ENCODE measurements at regions of chr1 and their contacts with region 1.

Region 1: GRCh38 chr1:32817159-32817814 is at the starts of genes S100PBP and YARS1:
- DNase-seq: peak; percentile 99
- H3K4me3 ChIP-seq: peak within 1 kb of the TSS; percentile 100
- H3K27ac ChIP-seq: peak within 1 kb of the TSS; percentile 99
- H3K4me1 ChIP-seq: peaks cover 62% of the 10 kb centered on the region
- CTCF ChIP-seq: no peak
- total RNA-seq, gene S100PBP: 72.1 and 91.8 TPM in 2 replicates
- total RNA-seq, gene YARS1: 276 and 282 TPM in 2 replicates

Region 2: DNA sequence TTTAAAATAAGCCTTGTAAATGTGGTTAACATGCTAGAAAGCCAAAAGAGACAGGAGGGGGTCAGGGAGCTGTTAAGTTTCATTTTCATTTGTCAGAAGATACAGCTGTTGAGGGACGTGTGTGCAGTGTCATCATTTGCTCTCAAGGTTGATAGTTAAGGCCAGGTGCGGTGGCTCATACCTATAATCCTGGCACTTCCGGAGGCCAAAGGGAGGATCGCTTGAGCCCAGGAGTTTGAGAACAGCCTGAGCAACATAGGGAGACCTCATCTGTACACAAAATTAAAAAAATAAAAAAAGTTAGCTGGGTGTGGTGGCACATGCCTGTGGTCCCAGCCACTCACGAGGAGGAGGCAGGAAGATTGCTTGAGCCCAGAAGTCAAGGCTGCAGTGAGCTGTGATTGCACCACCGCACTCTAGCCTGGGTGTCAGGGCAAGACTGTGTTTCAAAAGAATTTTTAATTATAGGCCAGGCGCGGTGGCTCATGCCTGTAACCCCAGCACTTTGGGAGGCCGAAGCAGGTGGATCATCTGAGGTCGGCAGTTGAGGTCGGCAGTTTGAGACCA is 189.6 kb before region 1 on chr1:
- CTCF ChIA-PET with region 1: no interaction called
- POLR2A ChIA-PET with region 1: no interaction called
- intact Hi-C with region 1: loop called (anchors 1 kb)
- DNase-seq: peak; percentile 84
- H3K4me3 ChIP-seq: peak overlapping the region; percentile 31
- H3K27ac ChIP-seq: peak overlapping the region; percentile 89
- H3K4me1 ChIP-seq: peaks cover 63% of the 10 kb centered on the region
- CTCF ChIP-seq: no peak

Region 3: GRCh38 chr1:32650752-32651460 is 166.4 kb before region 1 on chr1 and contains the start of gene RBBP4:
- CTCF ChIA-PET with region 1: no interaction called
- POLR2A ChIA-PET with region 1: no interaction called
- intact Hi-C with region 1: loop called (anchors 1 kb)
- DNase-seq: peak; percentile 98
- H3K4me3 ChIP-seq: peak within 1 kb of the TSS; percentile 82
- H3K27ac ChIP-seq: peak within 1 kb of the TSS; percentile 96
- H3K4me1 ChIP-seq: peaks cover 61% of the 10 kb centered on the region
- CTCF ChIP-seq: no peak
- total RNA-seq, gene RBBP4: 353 and 393 TPM in 2 replicates

Region 4: DNA sequence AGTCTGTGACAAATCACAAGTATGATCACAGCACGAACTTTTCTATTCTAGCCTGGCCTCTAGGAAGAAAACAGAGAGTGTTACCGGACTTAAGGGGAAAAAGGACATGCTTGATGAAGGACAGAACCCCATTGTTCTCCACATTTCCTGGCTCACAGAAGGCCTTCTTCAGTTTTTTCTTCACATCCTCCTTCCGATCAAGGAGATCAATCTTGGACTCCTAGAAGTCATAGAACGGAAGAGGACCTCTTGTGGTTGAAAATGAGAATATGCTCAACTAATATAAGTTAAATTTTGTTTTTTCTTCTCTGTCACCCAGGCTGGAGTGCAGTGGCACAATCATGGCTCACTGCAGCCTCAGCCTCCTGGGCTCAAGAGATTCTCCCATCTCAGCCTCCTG is 30.4 kb before region 1 on chr1:
- CTCF ChIA-PET with region 1: no interaction called
- POLR2A ChIA-PET with region 1: no interaction called
- intact Hi-C with region 1: no loop called
- DNase-seq: peak; percentile 25
- H3K4me3 ChIP-seq: no peak overlapping the region
- H3K27ac ChIP-seq: no peak overlapping the region
- H3K4me1 ChIP-seq: no peaks in the 10 kb centered on the region
- CTCF ChIP-seq: peak; percentile 63

Region 5: GRCh38 chr1:32876341-32877210 is 59.3 kb after region 1 on chr1:
- CTCF ChIA-PET with region 1: interaction called, 3 read pairs
- POLR2A ChIA-PET with region 1: no interaction called
- intact Hi-C with region 1: loop called (anchors 2 kb)
- DNase-seq: peak; percentile 73
- H3K4me3 ChIP-seq: no peak overlapping the region
- H3K27ac ChIP-seq: no peak overlapping the region
- H3K4me1 ChIP-seq: peaks cover 35% of the 10 kb centered on the region
- CTCF ChIP-seq: peak; percentile 97

Region 6: GRCh38 chr1:32964461-32965250 is 147.4 kb after region 1 on chr1 and contains the start of gene RNF19B:
- CTCF ChIA-PET with region 1: no interaction called
- POLR2A ChIA-PET with region 1: no interaction called
- intact Hi-C with region 1: loop called (anchors 5 kb)
- DNase-seq: peak; percentile 97
- H3K4me3 ChIP-seq: peak within 1 kb of the TSS; percentile 96
- H3K27ac ChIP-seq: peak within 1 kb of the TSS; percentile 67
- H3K4me1 ChIP-seq: peaks cover 21% of the 10 kb centered on the region
- CTCF ChIP-seq: no peak
- total RNA-seq, gene RNF19B: 21.1 and 23.0 TPM in 2 replicates

Measured in OCI-LY7 (cell line).